PC-3 (cell line): ENCODE measurements at regions of chr14 and their contacts with region 1.

Region 1: DNA sequence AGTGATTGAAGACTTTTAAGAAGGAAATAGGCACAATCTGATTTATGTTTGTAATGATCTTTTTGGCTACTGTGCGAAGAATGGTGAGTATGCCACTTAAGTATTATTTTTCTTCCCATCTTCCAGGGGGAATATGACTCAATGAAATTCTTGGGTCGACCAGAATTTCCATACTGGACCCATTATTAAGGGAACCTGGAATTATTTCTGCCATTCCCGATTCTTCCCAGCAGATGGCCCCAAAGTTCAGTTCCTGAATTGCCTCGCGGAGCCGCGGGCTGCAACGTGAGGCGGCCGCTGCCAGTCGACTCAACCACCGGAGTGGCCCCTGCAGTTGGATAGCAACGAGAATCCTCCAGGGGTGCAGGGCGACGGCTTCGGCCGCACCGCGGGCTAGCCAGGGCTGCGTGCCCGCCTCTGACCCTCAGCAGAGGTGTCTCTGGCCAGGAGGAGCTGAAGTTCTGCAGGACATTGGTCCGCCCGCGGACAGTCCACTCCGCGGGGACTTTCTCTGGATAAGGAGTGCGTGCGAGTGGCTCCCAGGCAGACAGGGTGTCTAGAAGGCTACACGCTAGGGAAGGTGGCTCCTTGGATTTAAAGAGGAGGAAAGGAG is 628 bp upstream of the TSHR start:
- DNase-seq: peak; percentile 88
- ATAC-seq: peak; percentile 93
- H3K4me3 ChIP-seq: peak overlapping the region; percentile 72
- H3K27ac ChIP-seq: no peak overlapping the region
- H3K4me1 ChIP-seq: no peaks in the 10 kb centered on the region; the same call in 1 of the 2 replicates
- H3K27me3 ChIP-seq: peaks cover 44% of the 10 kb centered on the region
- CTCF ChIP-seq: peak; percentile 78

Region 2: DNA sequence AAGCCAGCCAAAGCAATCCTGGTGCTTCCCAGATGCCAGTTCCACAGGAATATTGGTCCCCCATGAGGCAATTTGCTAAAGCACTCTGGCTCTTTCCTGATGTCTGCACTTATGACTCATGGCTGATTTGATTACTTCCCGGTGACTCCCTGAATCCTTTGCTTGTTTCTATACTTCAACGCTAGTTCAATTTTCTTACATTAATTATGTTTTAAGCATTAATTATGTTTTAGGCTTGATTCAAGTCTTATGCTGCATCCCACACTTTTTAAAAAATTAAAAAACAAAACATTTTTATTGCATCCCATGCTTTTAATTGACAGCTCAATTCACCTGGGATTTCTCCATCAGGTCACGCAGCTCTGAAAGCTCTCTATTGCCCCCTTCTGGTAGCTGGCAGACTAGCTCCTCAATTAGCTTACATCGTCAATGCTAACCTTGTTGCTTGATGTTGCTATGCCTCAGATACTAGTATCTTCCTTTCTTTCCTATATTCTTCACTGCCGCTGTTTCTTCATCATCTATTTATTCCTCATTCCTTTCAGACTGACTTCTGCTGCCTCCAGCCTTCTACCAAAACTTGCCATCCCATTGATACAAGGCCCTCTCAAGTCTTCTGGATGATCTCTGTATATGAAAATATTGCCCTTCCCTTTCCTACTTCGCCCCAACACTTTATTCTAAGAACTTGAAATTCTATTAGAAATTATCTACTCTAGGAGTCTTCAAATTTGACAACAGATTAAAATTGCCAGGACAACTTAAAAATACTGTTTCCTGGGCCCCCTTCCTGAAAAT is 32.6 kb after region 1 on chr14:
- CTCF ChIA-PET with region 1: interaction called, 16 read pairs
- POLR2A ChIA-PET with region 1: no interaction called
- intact Hi-C with region 1: loop called (anchors 1 kb)
- DNase-seq: peak; percentile 87
- ATAC-seq: peak; percentile 92
- H3K4me3 ChIP-seq: no peak overlapping the region; the same call in 1 of the 2 replicates
- H3K27ac ChIP-seq: no peak overlapping the region
- H3K4me1 ChIP-seq: no peaks in the 10 kb centered on the region
- H3K27me3 ChIP-seq: peaks cover 46% of the 10 kb centered on the region
- CTCF ChIP-seq: peak; percentile 93

Region 3: DNA sequence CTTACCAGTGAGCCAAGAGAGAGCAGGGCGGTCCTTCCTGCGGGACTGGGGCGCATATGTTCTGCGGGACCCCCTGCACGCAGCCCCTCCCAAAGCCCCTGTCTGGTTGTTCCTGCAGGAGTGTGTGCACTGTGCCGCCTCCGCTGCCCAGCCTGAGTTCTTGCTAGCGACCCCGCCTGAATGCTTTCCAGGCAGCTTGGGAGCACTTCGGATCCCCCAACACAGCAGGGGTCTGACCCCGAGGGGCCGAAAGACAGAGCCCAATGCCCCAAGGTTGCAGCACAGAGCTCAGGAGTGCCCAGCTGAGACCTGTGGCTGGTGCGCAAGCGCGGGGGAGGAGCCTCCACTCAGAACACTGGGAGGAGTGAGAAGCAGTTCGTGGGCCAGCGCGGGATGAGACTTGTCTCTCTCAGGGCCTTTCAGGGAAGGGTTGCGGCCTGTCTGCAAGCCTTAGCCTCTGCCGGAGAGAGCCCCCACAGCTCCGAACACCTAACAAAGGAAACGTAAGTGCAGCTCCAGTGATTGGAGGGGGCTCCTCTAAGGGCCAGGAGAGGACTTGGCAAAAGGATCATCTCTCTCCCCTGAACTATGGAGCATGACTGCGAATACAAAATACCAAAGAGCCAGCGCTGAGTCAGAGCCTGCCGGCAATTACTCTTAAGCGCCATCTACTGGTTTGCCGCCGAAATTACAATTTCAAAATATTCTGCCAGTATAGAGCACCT is 215.5 kb after region 1 on chr14:
- CTCF ChIA-PET with region 1: no interaction called
- POLR2A ChIA-PET with region 1: no interaction called
- intact Hi-C with region 1: loop called (anchors 1 kb)
- DNase-seq: peak; percentile 84
- ATAC-seq: peak; percentile 99
- H3K4me3 ChIP-seq: peak overlapping the region; percentile 92
- H3K27ac ChIP-seq: peak overlapping the region; percentile 88
- H3K4me1 ChIP-seq: peaks cover 14% of the 10 kb centered on the region
- H3K27me3 ChIP-seq: no peaks in the 10 kb centered on the region
- CTCF ChIP-seq: peak; percentile 91

Region 4: GRCh38 chr14:81211844-81212243 is 257.1 kb after region 1 on chr14:
- CTCF ChIA-PET with region 1: no interaction called
- POLR2A ChIA-PET with region 1: no interaction called
- intact Hi-C with region 1: loop called (anchors 5 kb)
- DNase-seq: peak; percentile 38
- ATAC-seq: 0 out of 2 replicates have a peak, but pooled peaks have one; percentile 58
- H3K4me3 ChIP-seq: no peak overlapping the region
- H3K27ac ChIP-seq: no peak overlapping the region
- H3K4me1 ChIP-seq: no peaks in the 10 kb centered on the region
- H3K27me3 ChIP-seq: no peaks in the 10 kb centered on the region
- CTCF ChIP-seq: peak; percentile 59

Region 5: DNA sequence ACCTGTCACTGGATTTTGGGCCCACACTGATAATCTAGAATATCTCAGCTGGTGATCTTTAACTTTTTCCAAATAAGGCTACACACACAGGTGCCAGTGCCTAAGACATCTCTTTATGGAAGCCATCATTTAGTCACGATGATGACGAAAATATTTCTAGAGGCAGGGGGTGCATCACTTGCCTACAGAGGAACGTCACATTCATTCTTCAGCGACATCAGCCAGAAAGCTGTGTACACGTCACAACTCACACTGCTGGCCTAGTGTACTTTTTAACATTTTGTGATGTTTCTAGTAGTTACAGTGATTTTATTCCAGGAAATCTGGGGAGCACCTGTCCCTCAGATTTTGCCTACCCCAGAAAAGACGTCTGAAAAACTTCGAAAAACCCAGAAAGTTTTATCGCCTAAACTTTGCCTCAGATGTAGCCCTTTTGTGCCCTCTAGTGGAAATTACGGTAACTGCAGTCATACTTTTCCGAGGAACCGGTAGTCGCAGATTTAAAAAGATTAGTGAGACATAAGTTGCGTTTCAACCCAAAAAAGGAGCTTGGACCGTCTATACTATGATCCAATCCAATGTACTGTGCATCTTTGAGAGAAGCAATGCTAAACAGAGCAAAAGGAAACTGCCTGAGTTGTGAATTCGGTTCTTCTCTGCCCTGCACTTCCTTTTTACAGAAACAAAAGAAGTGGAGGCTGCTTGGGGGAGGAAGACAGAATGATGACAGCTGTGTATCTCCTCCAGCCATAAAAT is 509.6 kb after region 1 on chr14:
- CTCF ChIA-PET with region 1: no interaction called
- POLR2A ChIA-PET with region 1: no interaction called
- intact Hi-C with region 1: loop called (anchors 2 kb)
- DNase-seq: peak; percentile 88
- ATAC-seq: peak; percentile 44; the same call in 1 of the 2 replicates
- H3K4me3 ChIP-seq: peak overlapping the region; percentile 61
- H3K27ac ChIP-seq: no peak overlapping the region
- H3K4me1 ChIP-seq: no peaks in the 10 kb centered on the region
- H3K27me3 ChIP-seq: no peaks in the 10 kb centered on the region
- CTCF ChIP-seq: peak; percentile 96